ENCODE measurements at regions of chr9 and their contacts with region 1.

Region 1: DNA sequence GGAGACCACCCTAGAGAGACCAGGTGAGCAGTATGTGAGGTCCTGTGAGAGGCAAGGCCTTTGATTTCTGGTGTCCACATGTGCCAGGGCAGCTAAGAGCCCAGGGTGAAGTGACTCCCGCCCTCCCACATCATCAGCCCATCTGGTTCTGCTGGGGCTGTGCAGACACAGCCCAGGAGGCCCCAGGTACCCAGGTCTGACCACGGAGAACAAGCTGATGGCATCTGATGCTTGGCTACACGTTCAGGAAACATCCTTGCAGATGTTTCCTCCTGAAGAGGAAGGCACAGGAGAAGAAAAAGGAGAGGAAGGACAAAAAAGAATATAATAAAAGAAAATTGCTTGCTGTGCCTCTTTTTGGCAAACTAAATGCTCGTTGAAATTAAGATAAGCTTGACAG is 225.8 kb downstream of the PAX5 start:
- DNase-seq: no peak
- H3K4me3 ChIP-seq: no peak overlapping the region
- CTCF ChIP-seq: no peak

Region 2: DNA sequence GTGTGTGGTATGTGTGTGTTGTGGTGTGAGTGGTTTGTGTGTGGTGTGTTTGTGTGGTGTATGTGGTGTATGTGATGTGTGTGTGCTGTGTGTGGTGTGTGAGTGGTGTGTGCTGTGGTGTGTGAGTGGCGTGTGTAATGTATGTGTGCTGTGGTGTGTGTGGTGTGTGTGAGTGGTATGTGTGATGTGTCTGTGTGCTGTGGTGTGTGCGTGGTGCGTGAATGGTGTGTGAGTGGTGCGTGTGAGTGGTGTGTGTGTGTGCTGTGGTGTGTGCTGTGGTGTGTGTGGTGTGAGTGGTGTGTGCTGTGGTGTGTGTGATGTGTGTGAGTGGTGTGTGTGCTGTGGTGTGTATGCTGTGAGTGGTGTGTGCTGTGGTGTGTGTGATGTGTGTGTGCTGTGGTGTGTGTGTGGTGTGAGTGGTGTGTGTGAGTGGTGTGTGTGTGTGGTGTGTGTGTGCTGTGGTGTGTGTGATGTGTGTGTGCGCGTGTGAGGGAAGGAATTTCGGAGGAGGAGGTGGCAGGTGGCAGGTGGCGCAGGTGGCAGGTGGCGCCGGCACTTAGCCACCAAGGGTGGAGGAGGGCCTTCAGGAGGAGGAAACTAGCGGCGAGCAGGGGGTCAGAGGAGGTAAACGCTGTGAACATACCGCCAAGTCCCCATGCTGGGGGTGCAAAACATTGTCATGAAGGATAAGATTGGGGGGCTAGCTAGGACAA is 43.7 kb before region 1 on chr9:
- in situ Hi-C with region 1: loop called (anchors 5 kb)
- DNase-seq: no peak
- H3K4me3 ChIP-seq: no peak overlapping the region
- CTCF ChIP-seq: no peak

Measured in astrocyte of the cerebellum (primary cell).